Naive thymus-derived CD4-positive, alpha-beta T cell (primary cell): ENCODE measurements at regions of chr9 and their contacts with region 1.

Region 1: DNA sequence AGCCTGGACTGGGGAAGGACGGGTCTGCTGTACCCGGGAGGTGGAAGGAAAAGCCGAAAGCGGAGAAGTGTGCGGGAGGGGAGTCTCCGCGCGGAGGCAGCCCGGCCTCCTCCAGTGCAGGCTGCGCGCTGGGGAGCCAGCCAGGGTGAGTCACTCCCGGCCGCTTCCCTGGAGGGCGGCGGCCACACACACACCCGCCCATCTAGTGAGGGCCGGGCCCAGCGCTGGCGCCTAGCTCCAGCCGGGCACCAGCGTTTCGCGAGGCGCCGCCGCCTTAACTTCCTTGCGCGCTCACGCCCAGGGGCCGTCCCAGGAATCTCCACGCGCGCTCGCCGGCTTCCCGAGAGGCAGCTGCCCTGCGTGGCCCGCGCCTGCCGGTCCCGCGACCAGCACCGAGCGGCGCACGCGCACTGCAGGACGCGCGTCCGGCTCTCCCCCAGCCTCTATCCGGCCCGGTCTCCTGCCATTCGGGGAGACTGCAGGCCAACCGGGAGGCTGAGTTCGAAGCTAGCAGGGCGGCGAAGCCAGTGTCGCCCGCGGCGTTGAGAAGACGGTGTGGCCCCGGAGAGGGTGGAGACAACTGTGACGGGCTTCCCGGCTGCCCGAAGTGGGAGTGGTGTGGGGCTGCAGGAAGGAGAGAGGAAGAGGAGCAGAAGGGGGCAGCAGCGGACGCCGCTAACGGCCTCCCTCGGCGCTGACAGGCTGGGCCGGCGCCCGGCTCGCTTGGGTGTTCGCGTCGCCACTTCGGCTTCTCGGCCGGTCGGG is at the start of gene JAK2:
- DNase-seq: peak; percentile 62 to 85 (median 72)
- ATAC-seq: peak; percentile 87
- H3K4me3 ChIP-seq: peak within 1 kb of the TSS; percentile 52
- H3K4me3 Mint-ChIP-seq: peak within 1 kb of the TSS; percentile 83 to 98 (median 94)
- H3K27ac ChIP-seq: peak within 1 kb of the TSS; percentile 78
- H3K27ac Mint-ChIP-seq: peak within 1 kb of the TSS; percentile 80 to 94 (median 90)
- H3K4me1 ChIP-seq: peaks cover 20 to 32% of the 10 kb centered on the region in 2 donors
- H3K4me1 Mint-ChIP-seq: peaks cover 20 to 41% (median 26%) of the 10 kb centered on the region in 7 donors
- H3K27me3 ChIP-seq: no peaks in the 10 kb centered on the region
- H3K27me3 Mint-ChIP-seq: no peaks in the 10 kb centered on the region
- total RNA-seq, gene JAK2: 11.7 to 76.0 (median 17.5) TPM

Region 2: DNA sequence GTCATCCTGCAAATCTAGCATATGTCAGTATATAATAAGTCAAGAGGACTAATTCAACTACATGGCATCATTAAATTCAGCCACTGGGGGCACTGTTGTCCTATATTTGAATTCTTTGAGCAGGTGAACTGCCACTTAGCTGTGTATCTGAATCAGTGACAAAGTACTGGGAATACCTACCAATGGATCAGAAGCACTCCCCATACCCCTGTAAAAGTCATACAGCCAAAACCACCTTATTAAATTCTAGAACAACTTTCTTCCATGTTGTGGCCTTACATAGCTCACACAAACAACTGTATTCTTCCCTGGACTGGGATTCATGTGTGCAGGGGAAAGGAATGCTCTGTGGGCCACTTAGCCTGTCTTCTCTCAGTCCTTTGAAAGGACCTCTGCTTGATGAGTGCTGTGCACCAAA is 380.1 kb before region 1 on chr9:
- CTCF ChIA-PET with region 1: interaction called, 5 read pairs
- POLR2A ChIA-PET with region 1: no interaction called
- intact Hi-C with region 1: loop called (anchors 1 to 5 kb)
- DNase-seq: peak in 8 of 9 donors; percentile 38 to 77 (median 60)
- ATAC-seq: peak; percentile 88
- H3K4me3 ChIP-seq: peak overlapping the region; percentile 18
- H3K4me3 Mint-ChIP-seq: peak overlapping the region in 3 of 10 donors; percentile 40 to 53 (median 50)
- H3K27ac ChIP-seq: no peak overlapping the region
- H3K27ac Mint-ChIP-seq: peak overlapping the region in 6 of 9 donors; percentile 17 to 85 (median 82)
- H3K4me1 ChIP-seq: peaks cover 16 to 29% of the 10 kb centered on the region in 2 donors
- H3K4me1 Mint-ChIP-seq: peaks cover 12 to 52% (median 32%) of the 10 kb centered on the region in 7 donors
- H3K27me3 ChIP-seq: no peaks in the 10 kb centered on the region
- H3K27me3 Mint-ChIP-seq: no peaks in the 10 kb centered on the region

Region 3: DNA sequence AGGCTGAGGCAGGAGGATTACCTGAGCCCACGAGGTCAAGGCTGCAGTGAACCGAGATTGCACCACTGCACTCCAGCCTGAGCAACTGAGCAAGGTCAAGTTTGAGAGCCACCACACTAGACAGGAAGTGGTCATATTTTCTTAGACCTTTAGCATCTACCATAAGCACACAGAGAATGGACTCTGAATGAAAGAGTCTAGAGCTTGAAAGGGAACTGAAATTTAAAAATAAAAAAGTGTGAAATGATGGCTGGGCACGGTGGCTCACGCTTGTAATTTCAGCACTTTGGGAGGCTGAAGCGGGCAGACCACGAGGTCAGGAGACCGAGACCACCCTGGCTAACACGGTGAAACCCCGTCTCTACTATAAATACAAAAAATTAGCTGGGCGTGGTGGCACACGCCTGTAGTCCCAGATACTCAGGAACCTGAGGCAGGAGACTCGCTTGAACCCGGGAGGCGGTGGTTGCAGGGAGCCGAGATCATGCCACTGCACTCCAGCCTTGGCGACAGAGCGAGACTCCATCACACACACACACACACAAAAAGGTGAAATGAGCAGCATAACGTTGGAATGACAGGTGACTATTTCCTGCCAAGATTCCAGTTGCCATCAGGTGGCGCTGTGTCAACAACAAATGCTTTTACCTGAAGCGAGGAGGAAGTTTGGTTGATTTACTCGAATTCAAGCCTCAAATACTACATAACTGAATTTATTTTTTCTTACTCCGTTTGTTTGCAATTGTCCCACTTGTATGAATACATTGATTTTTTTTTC is 222.5 kb before region 1 on chr9:
- CTCF ChIA-PET with region 1: interaction called, 25 read pairs
- POLR2A ChIA-PET with region 1: interaction called, 3 read pairs
- intact Hi-C with region 1: loop called (anchors 1 kb)
- DNase-seq: peak; percentile 56 to 83 (median 76)
- ATAC-seq: peak; percentile 79
- H3K4me3 ChIP-seq: no peak overlapping the region
- H3K4me3 Mint-ChIP-seq: peak overlapping the region; percentile 39 to 79 (median 64)
- H3K27ac ChIP-seq: no peak overlapping the region
- H3K27ac Mint-ChIP-seq: peak overlapping the region in 5 of 9 donors; percentile 29 to 83 (median 51)
- H3K4me1 ChIP-seq: peaks cover 0 to 3% of the 10 kb centered on the region in 2 donors
- H3K4me1 Mint-ChIP-seq: peaks cover 0 to 20% (median 10%) of the 10 kb centered on the region in 7 donors
- H3K27me3 ChIP-seq: no peaks in the 10 kb centered on the region
- H3K27me3 Mint-ChIP-seq: peaks cover 0 to 11% (median 7%) of the 10 kb centered on the region in 5 donors

Region 4: DNA sequence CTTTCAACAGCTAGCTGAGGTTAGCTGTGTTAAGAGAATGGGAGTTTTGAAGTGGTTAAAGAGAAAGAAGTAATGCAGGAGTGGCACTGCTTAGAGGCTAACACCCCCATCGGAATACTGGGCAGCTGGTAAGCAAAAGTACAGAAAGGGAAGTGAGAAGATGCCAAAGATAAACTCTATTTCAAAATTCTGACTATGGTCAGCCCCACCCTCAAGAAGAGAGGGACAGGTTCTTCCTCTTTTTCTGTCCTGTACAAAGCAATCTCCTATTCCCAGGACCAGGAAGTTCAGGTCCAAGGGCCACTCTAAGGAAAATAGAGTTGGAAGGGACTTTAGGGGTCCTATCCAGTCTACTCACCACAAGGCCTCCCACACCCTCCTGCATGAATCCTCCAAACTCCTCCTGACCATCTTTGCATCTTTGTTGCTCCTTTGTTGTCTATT is 45.7 kb before region 1 on chr9:
- CTCF ChIA-PET with region 1: interaction called, 3 read pairs
- POLR2A ChIA-PET with region 1: no interaction called
- intact Hi-C with region 1: loop called in 1 of 2 experiments (anchors 1 kb)
- DNase-seq: peak in 2 of 9 donors; percentile 2 to 24
- ATAC-seq: peak; percentile 88
- H3K4me3 ChIP-seq: no peak overlapping the region
- H3K4me3 Mint-ChIP-seq: peak overlapping the region in 7 of 10 donors; percentile 2 to 56 (median 29)
- H3K27ac ChIP-seq: no peak overlapping the region
- H3K27ac Mint-ChIP-seq: peak overlapping the region in 4 of 9 donors; percentile 7 to 80 (median 24)
- H3K4me1 ChIP-seq: peaks cover 16 to 21% of the 10 kb centered on the region in 2 donors
- H3K4me1 Mint-ChIP-seq: peaks cover 30 to 66% (median 38%) of the 10 kb centered on the region in 7 donors
- H3K27me3 ChIP-seq: no peaks in the 10 kb centered on the region
- H3K27me3 Mint-ChIP-seq: no peaks in the 10 kb centered on the region

Region 5: DNA sequence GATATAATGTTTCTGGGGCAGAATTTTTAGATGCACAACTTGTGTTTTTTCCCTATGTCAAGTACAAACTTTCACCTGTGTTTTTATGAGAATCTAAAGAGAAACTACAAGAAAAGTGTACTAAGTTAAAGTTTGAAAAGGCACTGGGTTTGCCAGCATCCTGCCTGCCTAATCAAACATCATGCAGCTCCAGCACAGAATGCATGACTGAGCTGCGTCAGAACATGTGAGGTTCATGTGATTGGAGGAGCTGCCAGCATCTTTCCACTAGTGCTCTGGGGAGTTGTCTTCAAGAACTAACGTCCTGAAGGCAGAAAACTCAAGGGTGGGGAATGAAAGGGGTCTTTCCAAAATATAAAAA is 598.0 kb after region 1 on chr9:
- CTCF ChIA-PET with region 1: no interaction called
- POLR2A ChIA-PET with region 1: no interaction called
- intact Hi-C with region 1: loop called (anchors 1 to 10 kb)
- DNase-seq: peak in 7 of 9 donors; percentile 55 to 81 (median 68)
- ATAC-seq: peak; percentile 82
- H3K4me3 ChIP-seq: no peak overlapping the region
- H3K4me3 Mint-ChIP-seq: peak overlapping the region in 7 of 10 donors; percentile 0 to 43 (median 39)
- H3K27ac ChIP-seq: peak overlapping the region; percentile 43
- H3K27ac Mint-ChIP-seq: peak overlapping the region; percentile 48 to 98 (median 86)
- H3K4me1 ChIP-seq: peaks cover 24 to 30% of the 10 kb centered on the region in 2 donors
- H3K4me1 Mint-ChIP-seq: peaks cover 28 to 79% (median 62%) of the 10 kb centered on the region in 7 donors
- H3K27me3 ChIP-seq: no peaks in the 10 kb centered on the region
- H3K27me3 Mint-ChIP-seq: no peaks in the 10 kb centered on the region